Activated naive CD4-positive, alpha-beta T cell treated with anti-CD3 and anti-CD28 coated beads, Interleukin-2, amount 10 ng/mL, durations not matched to agents 7 days and 5 days (primary cell): ENCODE measurements at regions of chr2 and their contacts with region 1.

Region 1: DNA sequence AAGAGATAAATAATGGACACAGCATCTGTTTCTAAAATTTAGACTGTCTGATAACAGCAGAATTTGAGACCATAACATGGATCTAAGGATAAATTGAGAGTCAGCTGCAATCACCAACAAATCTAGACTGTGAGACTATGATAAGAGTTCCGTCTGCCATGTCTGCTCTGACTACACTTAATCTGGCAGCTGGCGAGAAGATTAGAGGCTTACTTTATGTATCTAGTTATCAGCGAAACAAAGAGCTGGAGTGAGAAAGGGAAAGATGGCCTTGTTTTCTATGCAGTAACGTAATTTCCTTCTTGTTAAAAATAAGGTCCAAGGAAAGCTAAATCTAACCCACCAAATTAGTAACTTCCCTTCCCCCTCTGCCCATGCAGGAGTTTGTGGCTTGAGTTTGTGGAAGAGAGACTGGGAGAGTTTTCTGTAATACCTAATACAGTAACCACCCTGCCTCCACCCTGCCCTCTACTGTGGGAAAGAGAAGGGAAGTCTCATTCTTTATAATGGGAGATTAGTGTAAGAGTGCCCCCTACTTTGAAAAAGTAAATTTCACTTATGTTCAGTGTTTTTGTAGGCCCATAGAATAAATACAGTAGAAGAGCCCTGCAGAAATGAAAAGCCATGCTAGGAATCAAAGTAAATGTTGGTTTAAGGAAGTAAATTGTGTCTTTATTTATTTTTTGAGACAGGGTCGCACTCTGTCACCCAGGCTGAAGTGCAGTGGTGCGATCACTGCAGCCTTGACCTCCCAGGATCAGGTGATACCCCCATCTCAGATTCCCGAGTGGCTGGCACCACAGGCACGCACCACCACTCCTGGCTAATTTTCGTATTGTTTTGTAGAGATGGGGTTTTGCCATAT is 27.5 kb downstream of the EML4 start:
- DNase-seq: peak; percentile 57
- H3K4me3 Mint-ChIP-seq: no peak overlapping the region
- H3K27ac Mint-ChIP-seq: peak overlapping the region; percentile 69
- H3K4me1 Mint-ChIP-seq: peaks cover 64% of the 10 kb centered on the region
- H3K27me3 Mint-ChIP-seq: no peaks in the 10 kb centered on the region

Region 2: GRCh38 chr2:41990688-41991087 is 205.9 kb before region 1 on chr2:
- CTCF ChIA-PET with region 1: no interaction called
- DNase-seq: no peak
- H3K4me3 Mint-ChIP-seq: no peak overlapping the region
- H3K27ac Mint-ChIP-seq: no peak overlapping the region
- H3K4me1 Mint-ChIP-seq: no peaks in the 10 kb centered on the region
- H3K27me3 Mint-ChIP-seq: peaks cover 12% of the 10 kb centered on the region

Region 3: GRCh38 chr2:42105330-42106256 is 91.0 kb before region 1 on chr2:
- CTCF ChIA-PET with region 1: interaction called, 145 read pairs
- DNase-seq: peak; percentile 94
- H3K4me3 Mint-ChIP-seq: no peak overlapping the region
- H3K27ac Mint-ChIP-seq: no peak overlapping the region
- H3K4me1 Mint-ChIP-seq: peaks cover 47% of the 10 kb centered on the region
- H3K27me3 Mint-ChIP-seq: no peaks in the 10 kb centered on the region

Region 4: GRCh38 chr2:42141687-42142546 is 54.7 kb before region 1 on chr2:
- CTCF ChIA-PET with region 1: interaction called, 11 read pairs
- DNase-seq: peak; percentile 45
- H3K4me3 Mint-ChIP-seq: no peak overlapping the region
- H3K27ac Mint-ChIP-seq: peak overlapping the region; percentile 53
- H3K4me1 Mint-ChIP-seq: peaks cover 60% of the 10 kb centered on the region
- H3K27me3 Mint-ChIP-seq: no peaks in the 10 kb centered on the region

Region 5: GRCh38 chr2:42169874-42170521 is 26.6 kb before region 1 on chr2:
- CTCF ChIA-PET with region 1: interaction called, 13 read pairs
- DNase-seq: peak; percentile 39
- H3K4me3 Mint-ChIP-seq: no peak overlapping the region
- H3K27ac Mint-ChIP-seq: no peak overlapping the region
- H3K4me1 Mint-ChIP-seq: peaks cover 27% of the 10 kb centered on the region
- H3K27me3 Mint-ChIP-seq: no peaks in the 10 kb centered on the region